K562 (cell line): ENCODE measurements at regions of chr16 and their contacts with region 1.

Region 1: DNA sequence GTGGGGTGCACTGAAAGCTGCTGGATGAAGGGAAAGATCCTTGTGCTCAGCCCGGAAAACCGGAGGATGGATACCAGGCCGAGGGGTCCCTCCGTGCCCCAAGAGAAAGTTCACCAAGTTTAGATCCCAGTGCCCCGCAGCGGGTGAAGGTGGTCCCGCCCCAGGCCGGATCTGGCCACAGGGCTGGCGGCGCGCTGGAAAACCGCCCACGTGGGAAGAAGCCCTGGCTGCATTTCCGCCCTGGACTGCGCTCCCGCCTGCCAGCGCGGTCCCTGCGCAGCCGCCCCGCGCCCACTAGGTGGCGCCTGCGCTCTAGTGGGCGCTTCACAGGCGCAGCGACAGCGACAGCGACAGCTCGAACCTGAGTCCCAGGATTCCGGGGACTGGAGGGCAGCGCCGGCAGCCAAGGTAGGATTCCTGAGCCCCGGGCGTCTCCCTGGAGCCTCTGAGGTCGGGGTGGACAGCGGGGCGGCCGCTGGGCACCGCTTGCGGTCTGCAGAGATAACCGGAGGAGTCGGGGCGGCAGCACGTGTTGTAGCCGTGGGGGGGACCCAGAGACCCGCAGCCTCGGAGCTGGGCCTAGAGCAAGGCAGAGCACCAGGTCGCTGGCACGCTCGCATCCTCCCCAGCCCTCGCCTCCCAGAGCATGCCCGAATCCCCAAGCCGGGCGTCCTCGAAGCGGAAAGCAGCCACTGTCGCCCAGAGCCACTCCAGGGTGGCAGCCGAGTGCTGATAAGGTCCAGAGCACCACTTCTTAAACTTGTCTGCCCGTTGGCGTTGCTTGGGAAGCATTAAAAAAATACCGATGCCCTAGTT is at the start of gene CHD9:
- DNase-seq: peak; percentile 88 to 94 (median 89)
- ATAC-seq: peak; percentile 89
- H3K4me3 ChIP-seq: peak within 1 kb of the TSS; percentile 78
- H3K27ac ChIP-seq: peak within 1 kb of the TSS; percentile 70
- H3K4me1 ChIP-seq: peaks cover 24 to 35% of the 10 kb centered on the region in 2 experiments; a peak in 4 of 5 replicates
- H3K27me3 ChIP-seq: no peaks in the 10 kb centered on the region
- CTCF ChIP-seq: peak; percentile 96 to 98 (median 97)
- EP300 ChIP-seq: no peak; the same call in 1 of the 2 replicates
- POLR2A ChIP-seq: peak; percentile 52
- RAD21 ChIP-seq: peak; percentile 97 to 98
- polyA plus RNA-seq, gene CHD9: 33.7 to 69.3 TPM

Region 2: DNA sequence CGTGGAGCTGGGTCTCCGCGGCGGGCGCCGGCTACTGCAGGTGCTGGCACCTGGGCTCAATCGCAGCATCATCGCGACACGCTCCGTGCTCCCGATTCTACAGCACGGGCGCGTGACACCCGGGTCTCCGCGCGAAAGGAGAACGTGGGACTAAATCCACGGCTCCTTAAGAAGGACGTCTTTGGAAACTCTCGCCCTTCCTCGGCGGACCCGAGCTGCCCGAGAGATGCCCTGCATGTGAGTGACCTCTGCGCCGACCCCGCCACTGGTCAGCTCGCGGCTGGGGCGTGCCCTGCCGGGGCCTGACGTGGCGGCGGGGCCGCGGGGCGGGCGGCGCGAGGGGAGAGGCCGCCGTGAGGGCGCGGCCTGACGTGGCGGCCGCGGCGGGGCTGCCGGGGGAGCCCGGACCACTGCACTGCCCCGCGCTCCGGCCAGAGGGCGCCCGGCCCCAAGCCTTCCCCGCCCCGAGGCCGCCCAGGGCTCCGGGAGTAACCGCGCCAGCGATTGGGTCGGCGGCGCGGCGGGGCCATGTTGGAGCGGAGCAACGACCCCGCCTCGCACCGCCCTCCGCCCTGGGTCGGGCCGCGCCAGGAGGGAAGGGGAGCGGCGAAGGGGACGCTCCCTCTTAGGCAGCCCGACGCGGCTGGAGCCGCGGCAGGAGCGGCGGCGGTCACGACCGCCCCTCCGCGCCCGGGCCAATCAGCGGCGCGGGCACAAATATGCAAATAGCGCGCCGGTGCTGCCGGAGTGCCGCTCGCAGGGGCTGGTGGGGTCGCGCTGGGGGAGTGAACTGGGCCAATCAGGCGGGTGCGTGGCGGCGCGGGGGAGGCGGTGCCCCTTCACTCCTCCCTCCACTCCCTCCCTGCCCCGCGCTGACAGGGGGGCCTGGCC is 75.5 kb after region 1 on chr16:
- CTCF ChIA-PET with region 1: interaction called, 4 read pairs
- POLR2A ChIA-PET with region 1: interaction called, 5 read pairs
- in situ Hi-C with region 1: no loop called
- intact Hi-C with region 1: loop called (anchors 1 kb)
- DNase-seq: peak; percentile 96 to 99 (median 96)
- ATAC-seq: peak; percentile 91
- H3K4me3 ChIP-seq: peak overlapping the region; percentile 86
- H3K27ac ChIP-seq: peak overlapping the region; percentile 92
- H3K4me1 ChIP-seq: peaks cover 23 to 26% of the 10 kb centered on the region in 2 experiments
- H3K27me3 ChIP-seq: no peaks in the 10 kb centered on the region
- CTCF ChIP-seq: peak; percentile 46 to 85 (median 75)
- EP300 ChIP-seq: no peak
- POLR2A ChIP-seq: peak; percentile 67
- RAD21 ChIP-seq: peak; percentile 83 to 86

Region 3: GRCh38 chr16:53207810-53208752 is 153.2 kb after region 1 on chr16:
- CTCF ChIA-PET with region 1: interaction called, 13 read pairs
- POLR2A ChIA-PET with region 1: interaction called, 4 read pairs
- in situ Hi-C with region 1: no loop called
- intact Hi-C with region 1: loop called (anchors 1 kb)
- DNase-seq: peak; percentile 54 to 93 (median 77)
- ATAC-seq: peak; percentile 84
- H3K4me3 ChIP-seq: peak overlapping the region; percentile 58
- H3K27ac ChIP-seq: peak overlapping the region; percentile 99
- H3K4me1 ChIP-seq: peaks cover 0 to 6% of the 10 kb centered on the region in 2 experiments; a peak in 2 of 5 replicates
- H3K27me3 ChIP-seq: no peaks in the 10 kb centered on the region
- CTCF ChIP-seq: peak; percentile 61 to 77 (median 71)
- EP300 ChIP-seq: 0 out of 2 replicates have a peak, but pooled peaks have one; percentile 38
- POLR2A ChIP-seq: peak; percentile 80
- RAD21 ChIP-seq: peak; percentile 68 to 77

Region 4: GRCh38 chr16:53282975-53283946 is 228.4 kb after region 1 on chr16:
- CTCF ChIA-PET with region 1: interaction called, 3 read pairs
- POLR2A ChIA-PET with region 1: no interaction called
- in situ Hi-C with region 1: no loop called
- intact Hi-C with region 1: loop called (anchors 10 kb)
- DNase-seq: peak in 2 of 4 experiments; percentile 21 to 22
- ATAC-seq: no peak
- H3K4me3 ChIP-seq: no peak overlapping the region
- H3K27ac ChIP-seq: no peak overlapping the region
- H3K4me1 ChIP-seq: no peaks in the 10 kb centered on the region
- H3K27me3 ChIP-seq: no peaks in the 10 kb centered on the region
- CTCF ChIP-seq: peak in 2 of 3 experiments; percentile 37 to 44; a peak in 3 of 6 replicates
- EP300 ChIP-seq: no peak
- POLR2A ChIP-seq: no peak
- RAD21 ChIP-seq: peak; percentile 11 to 53; a peak in 2 of 4 replicates

Region 5: DNA sequence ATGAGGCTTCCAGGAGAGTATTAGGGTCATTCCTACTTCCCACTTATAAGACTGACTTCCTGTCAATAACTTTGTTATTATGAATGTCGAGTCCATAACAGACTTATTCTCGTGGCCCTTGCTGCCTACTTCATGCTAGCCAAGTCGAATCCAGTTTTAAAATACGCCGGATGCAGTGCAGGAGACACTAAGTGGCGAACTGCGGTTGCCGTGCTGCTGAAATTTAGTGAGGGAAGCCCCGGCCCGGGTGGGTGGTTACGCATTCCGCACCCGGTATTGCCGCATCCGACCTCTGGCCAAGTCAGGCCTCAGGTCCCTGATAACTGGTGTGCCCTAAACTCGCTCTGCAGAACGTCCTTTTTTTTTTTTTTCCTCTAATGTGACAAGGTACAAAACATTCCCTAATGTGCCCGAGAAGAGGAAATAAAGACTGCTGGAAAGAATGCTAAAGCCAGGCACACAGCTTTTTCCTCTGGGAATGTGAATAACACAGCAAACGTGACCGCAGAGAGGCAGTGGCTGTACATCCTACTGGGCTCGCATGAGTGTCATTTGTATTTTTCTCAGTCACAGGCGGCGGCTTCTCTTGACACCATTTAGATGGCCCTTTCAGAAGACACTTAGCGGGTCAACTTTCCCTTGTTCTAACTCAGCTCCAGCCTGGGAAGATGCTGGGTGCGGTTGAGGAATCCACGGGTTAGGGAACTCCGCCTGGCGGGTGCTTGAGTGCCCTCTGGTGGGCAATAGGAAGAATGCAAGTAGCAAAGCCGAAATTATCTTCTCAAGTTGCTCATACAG is 455.2 kb after region 1 on chr16:
- CTCF ChIA-PET with region 1: no interaction called
- POLR2A ChIA-PET with region 1: no interaction called
- in situ Hi-C with region 1: loop called (anchors 10 kb)
- intact Hi-C with region 1: loop called (anchors 5 kb)
- DNase-seq: peak; percentile 70 to 77 (median 76)
- ATAC-seq: peak; percentile 82
- H3K4me3 ChIP-seq: no peak overlapping the region
- H3K27ac ChIP-seq: no peak overlapping the region
- H3K4me1 ChIP-seq: peaks cover 0 to 4% of the 10 kb centered on the region in 2 experiments; a peak in 2 of 5 replicates
- H3K27me3 ChIP-seq: no peaks in the 10 kb centered on the region; a peak in 3 of 5 replicates
- CTCF ChIP-seq: peak; percentile 74 to 86 (median 85)
- EP300 ChIP-seq: no peak
- POLR2A ChIP-seq: no peak
- RAD21 ChIP-seq: peak; percentile 60 to 81; a peak in 3 of 4 replicates